Activated naive CD4-positive, alpha-beta T cell treated with anti-CD3 and anti-CD28 coated beads for 36 hours (primary cell): ENCODE measurements at regions of chr3 and their contacts with region 1.

Region 1: GRCh38 chr3:124620600-124621063 is 109.6 kb upstream of the UMPS start:
- DNase-seq: peak; percentile 61
- H3K4me3 Mint-ChIP-seq: no peak overlapping the region
- H3K27ac Mint-ChIP-seq: peak overlapping the region; percentile 7
- H3K4me1 Mint-ChIP-seq: peaks cover 43% of the 10 kb centered on the region
- H3K27me3 Mint-ChIP-seq: no peaks in the 10 kb centered on the region

Region 2: GRCh38 chr3:124660599-124660998 is 40.0 kb after region 1 on chr3:
- CTCF ChIA-PET with region 1: interaction called, 4 read pairs
- intact Hi-C with region 1: loop called (anchors 2 kb)
- DNase-seq: no peak
- H3K4me3 Mint-ChIP-seq: no peak overlapping the region
- H3K27ac Mint-ChIP-seq: peak overlapping the region; percentile 57
- H3K4me1 Mint-ChIP-seq: peaks cover 24% of the 10 kb centered on the region
- H3K27me3 Mint-ChIP-seq: peaks cover 2% of the 10 kb centered on the region